ENCODE measurements at regions of chr3 and their contacts with region 1.

Region 1: GRCh38 chr3:62558549-62559112 is 185.3 kb upstream of the FEZF2 start:
- DNase-seq: no peak

Region 2: DNA sequence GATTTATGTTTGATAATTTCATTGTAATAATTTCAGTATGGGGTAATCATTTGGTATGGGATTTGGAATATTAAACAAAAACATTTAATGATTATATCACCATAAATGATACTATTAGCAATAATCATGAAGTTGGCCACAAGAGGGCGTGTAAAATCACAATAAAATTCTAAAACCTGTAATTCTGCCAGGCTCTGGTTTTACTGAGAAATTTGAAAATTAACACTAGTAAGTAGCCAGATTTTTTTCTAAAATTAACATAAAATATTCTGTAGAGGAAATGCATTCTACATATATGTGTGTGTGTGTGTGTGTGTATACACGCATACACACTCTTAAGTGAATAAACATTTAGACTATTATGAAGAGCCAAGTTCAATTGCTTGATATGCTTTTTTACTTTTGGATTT is 225.8 kb before region 1 on chr3:
- intact Hi-C with region 1: loop called (anchors 10 kb)
- DNase-seq: no peak

Region 3: DNA sequence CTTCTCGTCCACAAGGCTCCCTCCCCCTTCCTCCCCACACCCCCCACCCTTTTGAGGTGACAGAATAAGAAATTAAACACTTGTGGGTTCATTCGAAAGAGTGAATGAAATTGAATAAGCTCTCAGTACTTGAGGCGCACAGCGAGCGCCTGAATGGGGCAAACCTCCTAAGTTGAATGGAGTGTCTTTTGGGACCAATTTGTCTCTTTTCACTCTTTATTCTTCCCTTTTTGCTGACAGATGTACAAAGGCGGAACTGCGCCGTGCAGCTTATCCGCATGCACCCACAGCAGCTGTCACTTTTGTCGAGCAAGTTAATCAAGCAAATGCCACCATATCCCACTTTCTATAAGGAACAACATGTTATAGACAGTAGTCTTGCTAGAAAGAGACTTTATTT is 137.4 kb before region 1 on chr3:
- intact Hi-C with region 1: no loop called
- DNase-seq: no peak

Region 4: DNA sequence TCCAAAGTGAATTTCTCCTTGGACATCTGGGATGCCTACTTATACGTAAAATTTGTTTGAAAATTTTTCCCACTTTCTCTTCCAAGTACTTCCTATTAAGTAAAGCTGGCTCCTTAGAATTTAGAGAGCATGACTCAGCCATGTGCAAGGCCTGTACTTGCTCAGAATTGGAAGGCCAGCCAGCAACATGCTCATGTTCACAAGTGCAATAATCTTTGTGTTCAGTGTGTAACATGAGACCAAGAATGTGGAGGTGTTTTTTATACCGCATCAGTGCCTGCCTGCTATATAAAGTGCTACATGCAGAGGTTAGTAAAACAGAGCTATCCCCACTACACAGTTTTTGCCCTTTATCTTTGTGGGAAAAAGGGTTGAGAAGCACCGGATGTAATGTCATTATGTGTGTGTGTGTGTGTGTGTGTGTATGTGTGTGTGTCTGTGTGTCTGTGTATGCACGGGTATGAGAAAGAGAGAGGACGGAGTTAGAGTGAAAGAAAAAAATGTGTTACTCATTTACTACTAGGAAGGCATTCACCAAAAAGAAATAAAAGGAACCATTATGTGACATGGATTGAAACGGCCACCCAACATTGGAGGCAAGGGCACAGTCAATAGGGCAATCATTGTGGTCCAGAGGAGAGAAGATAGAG is 33.2 kb before region 1 on chr3:
- intact Hi-C with region 1: no loop called
- DNase-seq: no peak

Measured in cardiac septum (tissue), 1 donor.